ENCODE measurements at regions of chr17 and their contacts with region 1.

Region 1: GRCh38 chr17:67378454-67379250 is 1.6 kb downstream of the PITPNC1 start:
- DNase-seq: peak; percentile 69 to 88
- H3K4me3 ChIP-seq: peak overlapping the region; percentile 81
- H3K4me3 Mint-ChIP-seq: peak overlapping the region; percentile 72
- H3K27ac Mint-ChIP-seq: no peak overlapping the region
- H3K4me1 ChIP-seq: 0 out of 2 replicates have a peak, but pooled peaks cover 8% of the 10 kb centered on the region
- H3K4me1 Mint-ChIP-seq: peaks cover 9% of the 10 kb centered on the region
- H3K27me3 ChIP-seq: no peaks in the 10 kb centered on the region
- H3K27me3 Mint-ChIP-seq: peaks cover 3% of the 10 kb centered on the region
- CTCF ChIP-seq: peak; percentile 50 to 58

Region 2: GRCh38 chr17:67272312-67273050 is 106.2 kb before region 1 on chr17:
- CTCF ChIA-PET with region 1: no interaction called
- POLR2A ChIA-PET with region 1: no interaction called
- intact Hi-C with region 1: loop called (anchors 2 kb)
- DNase-seq: no peak
- H3K4me3 ChIP-seq: no peak overlapping the region
- H3K4me3 Mint-ChIP-seq: no peak overlapping the region
- H3K27ac Mint-ChIP-seq: no peak overlapping the region
- H3K4me1 ChIP-seq: no peaks in the 10 kb centered on the region
- H3K4me1 Mint-ChIP-seq: no peaks in the 10 kb centered on the region
- H3K27me3 ChIP-seq: no peaks in the 10 kb centered on the region
- H3K27me3 Mint-ChIP-seq: no peaks in the 10 kb centered on the region
- CTCF ChIP-seq: peak in 1 of 2 experiments; percentile 21

Region 3: GRCh38 chr17:67441052-67441927 is 62.6 kb after region 1 on chr17:
- CTCF ChIA-PET with region 1: no interaction called
- POLR2A ChIA-PET with region 1: no interaction called
- intact Hi-C with region 1: no loop called
- DNase-seq: no peak
- H3K4me3 ChIP-seq: no peak overlapping the region
- H3K4me3 Mint-ChIP-seq: no peak overlapping the region
- H3K27ac Mint-ChIP-seq: no peak overlapping the region
- H3K4me1 ChIP-seq: no peaks in the 10 kb centered on the region
- H3K4me1 Mint-ChIP-seq: no peaks in the 10 kb centered on the region
- H3K27me3 ChIP-seq: no peaks in the 10 kb centered on the region
- H3K27me3 Mint-ChIP-seq: peaks cover 3% of the 10 kb centered on the region
- CTCF ChIP-seq: no peak

Region 4: GRCh38 chr17:67475236-67475937 is 96.7 kb after region 1 on chr17:
- CTCF ChIA-PET with region 1: interaction called, 10 read pairs
- POLR2A ChIA-PET with region 1: no interaction called
- intact Hi-C with region 1: loop called (anchors 2 kb)
- DNase-seq: peak; percentile 47 to 71
- H3K4me3 ChIP-seq: no peak overlapping the region
- H3K4me3 Mint-ChIP-seq: no peak overlapping the region
- H3K27ac Mint-ChIP-seq: no peak overlapping the region
- H3K4me1 ChIP-seq: no peaks in the 10 kb centered on the region
- H3K4me1 Mint-ChIP-seq: no peaks in the 10 kb centered on the region
- H3K27me3 ChIP-seq: no peaks in the 10 kb centered on the region
- H3K27me3 Mint-ChIP-seq: no peaks in the 10 kb centered on the region
- CTCF ChIP-seq: peak; percentile 78 to 86

Region 5: GRCh38 chr17:67602956-67603355 is 224.3 kb after region 1 on chr17:
- CTCF ChIA-PET with region 1: no interaction called
- POLR2A ChIA-PET with region 1: no interaction called
- intact Hi-C with region 1: loop called (anchors 1 kb)
- DNase-seq: peak; percentile 55 to 61
- H3K4me3 ChIP-seq: no peak overlapping the region
- H3K4me3 Mint-ChIP-seq: no peak overlapping the region
- H3K27ac Mint-ChIP-seq: no peak overlapping the region
- H3K4me1 ChIP-seq: no peaks in the 10 kb centered on the region
- H3K4me1 Mint-ChIP-seq: peaks cover 7% of the 10 kb centered on the region
- H3K27me3 ChIP-seq: no peaks in the 10 kb centered on the region
- H3K27me3 Mint-ChIP-seq: peaks cover 5% of the 10 kb centered on the region
- CTCF ChIP-seq: peak; percentile 46 to 74

Region 6: GRCh38 chr17:67689534-67690177 is 311.0 kb after region 1 on chr17:
- CTCF ChIA-PET with region 1: interaction called, 3 read pairs
- POLR2A ChIA-PET with region 1: no interaction called
- intact Hi-C with region 1: loop called (anchors 1 kb)
- DNase-seq: peak in 1 of 2 experiments; percentile 68
- H3K4me3 ChIP-seq: no peak overlapping the region
- H3K4me3 Mint-ChIP-seq: no peak overlapping the region
- H3K27ac Mint-ChIP-seq: no peak overlapping the region
- H3K4me1 ChIP-seq: no peaks in the 10 kb centered on the region
- H3K4me1 Mint-ChIP-seq: no peaks in the 10 kb centered on the region
- H3K27me3 ChIP-seq: no peaks in the 10 kb centered on the region
- H3K27me3 Mint-ChIP-seq: peaks cover 2% of the 10 kb centered on the region
- CTCF ChIP-seq: peak; percentile 67 to 76

Region 7: DNA sequence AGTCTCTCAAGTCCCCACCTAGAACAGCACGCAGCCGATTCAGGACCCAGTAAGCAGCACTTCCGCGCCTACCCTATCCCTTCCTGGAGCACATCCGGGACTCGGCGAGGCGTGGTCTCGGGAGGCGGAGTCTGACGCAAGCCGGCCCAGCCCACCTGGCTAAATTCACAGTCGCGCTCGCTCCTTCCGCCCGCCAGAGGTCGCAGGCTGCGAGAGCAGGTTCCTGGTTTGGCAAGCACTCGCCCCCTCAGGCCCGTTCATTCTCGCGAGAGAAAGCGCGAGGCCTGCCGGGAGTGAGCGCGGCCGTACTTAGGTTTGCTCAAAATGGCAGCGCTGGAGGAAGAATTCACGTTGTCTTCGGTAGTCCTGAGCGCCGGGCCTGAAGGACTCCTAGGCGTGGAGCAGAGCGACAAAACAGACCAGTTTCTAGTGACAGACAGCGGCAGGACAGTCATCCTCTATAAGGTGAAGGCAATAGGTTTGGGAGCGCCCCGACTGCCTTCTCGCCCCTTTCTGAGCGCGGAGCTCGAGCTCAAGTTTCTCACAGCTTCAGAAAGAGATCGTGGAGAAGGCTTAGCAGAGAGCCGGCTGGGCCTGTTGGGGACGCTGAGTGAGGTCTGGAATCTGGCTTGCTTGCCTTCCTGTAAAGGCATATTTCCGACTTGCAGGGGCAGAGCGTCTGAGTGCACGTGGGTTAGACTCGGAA is 339.1 kb after region 1 on chr17 and contains the start of gene NOL11:
- CTCF ChIA-PET with region 1: no interaction called
- POLR2A ChIA-PET with region 1: no interaction called
- intact Hi-C with region 1: loop called (anchors 1 kb)
- DNase-seq: peak; percentile 99
- H3K4me3 ChIP-seq: peak within 1 kb of the TSS; percentile 65
- H3K4me3 Mint-ChIP-seq: peak within 1 kb of the TSS; percentile 99
- H3K27ac Mint-ChIP-seq: peak within 1 kb of the TSS; percentile 100
- H3K4me1 ChIP-seq: peaks cover 7% of the 10 kb centered on the region; the same call in 1 of the 2 replicates
- H3K4me1 Mint-ChIP-seq: no peaks in the 10 kb centered on the region
- H3K27me3 ChIP-seq: no peaks in the 10 kb centered on the region
- H3K27me3 Mint-ChIP-seq: no peaks in the 10 kb centered on the region
- CTCF ChIP-seq: peak; percentile 86 to 98
- total RNA-seq, gene NOL11: 69.0 and 73.6 TPM in 2 replicates

Measured in Caco-2 (cell line).